ENCODE measurements at regions of chr18 and their contacts with region 1.

Region 1: DNA sequence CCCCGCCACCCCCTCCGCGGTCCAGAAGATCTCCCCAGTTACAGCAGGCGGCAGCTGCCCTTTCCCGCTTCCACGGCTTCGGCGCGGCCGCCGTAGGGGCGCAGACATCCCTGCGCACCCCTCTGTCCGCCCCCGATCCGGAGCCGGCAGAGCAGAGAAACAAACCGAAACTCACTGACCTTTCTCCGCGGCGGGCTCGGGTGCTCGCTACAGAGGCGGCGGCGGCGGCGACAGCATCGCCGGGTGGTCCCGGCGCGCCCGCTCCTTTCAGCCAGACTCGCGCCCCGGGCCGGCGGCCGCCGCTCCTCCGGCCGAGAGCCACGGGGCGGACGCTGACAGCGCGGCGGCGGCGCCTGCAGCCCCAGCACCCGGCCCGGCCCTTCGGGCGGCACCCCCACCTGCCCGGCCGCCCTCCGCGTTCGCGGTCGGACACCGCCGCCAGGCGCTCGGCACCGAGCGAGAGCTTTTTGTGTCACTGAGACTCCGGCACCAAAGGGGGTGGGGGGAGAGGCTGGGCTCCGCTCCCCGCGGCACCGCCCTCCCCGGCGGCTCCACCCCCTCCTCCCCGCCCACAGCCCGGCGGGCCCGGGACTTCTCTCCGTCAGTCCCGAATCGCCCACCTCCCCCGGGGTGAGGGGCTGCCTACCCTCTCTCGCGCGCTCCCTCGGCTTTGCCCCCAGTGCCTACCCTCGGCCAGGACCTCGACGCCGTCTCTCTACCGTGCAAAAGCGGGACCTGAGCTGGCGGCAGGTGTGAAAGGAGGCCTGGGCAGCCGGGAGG is 1.4 kb upstream of the RNF152 start:
- DNase-seq: peak; percentile 89
- ATAC-seq: peak; percentile 96

Region 2: GRCh38 chr18:61743775-61744531 is 150.2 kb before region 1 on chr18:
- intact Hi-C with region 1: loop called (anchors 5 kb)
- DNase-seq: no peak
- ATAC-seq: peak; percentile 82

Region 3: GRCh38 chr18:61998957-61999356 is 104.8 kb after region 1 on chr18:
- intact Hi-C with region 1: no loop called
- DNase-seq: no peak
- ATAC-seq: no peak

Measured in Right ventricle myocardium inferior (tissue), 1 donor.